Dendritic cell treated with granulocyte-macrophage colony-stimulating factor and Interleukin-4, amounts not matched to agents 40 ng/mL and 50 ng/mL, for 4 days (primary cell): ENCODE measurements at regions of chr14 and their contacts with region 1.

Region 1: GRCh38 chr14:105414456-105415371 is 4.9 kb upstream of the MTA1 start:
- H3K4me3 Mint-ChIP-seq: peak overlapping the region; percentile 63
- H3K27ac Mint-ChIP-seq: peak overlapping the region; percentile 63
- H3K4me1 Mint-ChIP-seq: peaks cover 38% of the 10 kb centered on the region
- H3K27me3 Mint-ChIP-seq: peaks cover 64% of the 10 kb centered on the region

Region 2: DNA sequence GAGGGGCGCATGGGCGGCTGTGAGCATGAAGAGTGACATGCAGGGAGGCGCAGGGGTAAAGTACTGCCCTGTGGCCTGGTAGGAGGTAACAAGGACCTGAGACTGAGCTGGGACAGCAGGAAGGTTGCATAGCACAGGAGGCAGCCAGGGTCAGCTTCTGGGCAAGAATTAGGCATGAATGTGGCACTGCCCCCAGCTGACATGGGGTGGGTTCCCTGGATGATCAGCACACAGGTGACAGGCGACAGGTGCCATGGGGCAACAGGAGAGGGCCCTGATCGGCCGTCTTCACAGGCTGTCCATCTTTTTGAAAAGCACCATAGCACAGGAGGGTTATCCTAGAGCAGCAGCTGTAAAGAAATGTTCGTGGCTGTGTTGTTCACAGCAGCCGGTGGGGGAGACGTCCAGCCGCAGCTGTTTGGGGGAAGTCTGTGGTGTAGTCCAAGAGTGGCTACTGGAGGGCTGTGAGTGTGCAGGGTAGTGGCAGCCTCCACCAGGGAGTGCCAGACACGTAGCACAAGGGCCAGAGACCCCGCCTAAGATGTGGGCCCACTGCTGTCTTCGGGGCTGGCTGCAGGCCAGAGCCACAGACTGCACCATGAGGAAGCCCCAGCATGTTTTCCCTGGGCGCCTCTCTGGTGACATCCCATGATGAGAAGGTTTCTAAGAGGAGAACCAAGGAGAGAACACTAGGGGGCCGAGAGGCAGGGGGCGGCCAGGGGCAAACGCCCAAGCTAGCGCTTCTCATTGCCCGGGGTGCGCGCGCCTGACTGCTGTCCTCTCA is 420.7 kb before region 1 on chr14:
- intact Hi-C with region 1: no loop called
- H3K4me3 Mint-ChIP-seq: no peak overlapping the region
- H3K27ac Mint-ChIP-seq: no peak overlapping the region
- H3K4me1 Mint-ChIP-seq: no peaks in the 10 kb centered on the region
- H3K27me3 Mint-ChIP-seq: no peaks in the 10 kb centered on the region

Region 3: DNA sequence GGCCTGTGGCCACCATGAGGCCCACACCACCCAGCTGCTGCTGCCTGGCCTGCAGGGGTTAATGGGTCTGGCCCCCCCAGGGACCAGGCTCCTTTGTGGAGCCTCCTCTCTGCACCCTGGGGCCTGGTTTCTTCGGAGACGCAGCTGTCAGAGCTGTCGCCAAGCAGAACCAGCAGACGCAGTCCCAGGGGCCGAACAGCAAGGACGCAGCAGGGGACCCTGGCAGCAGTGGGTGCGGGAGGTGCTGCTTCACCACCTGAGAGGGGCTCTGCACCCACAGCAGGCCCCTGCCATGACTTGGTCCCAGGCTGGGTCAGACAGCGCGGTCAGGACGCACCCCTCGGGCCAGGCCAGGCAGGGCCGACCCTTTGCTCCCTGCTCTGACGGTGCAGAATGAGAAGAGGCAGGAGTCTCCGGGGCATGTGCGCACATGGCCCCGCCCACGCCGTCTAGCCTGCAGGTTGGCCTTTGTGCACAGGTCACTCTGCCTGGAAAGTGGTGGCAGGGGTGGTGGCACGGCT is 276.6 kb before region 1 on chr14:
- intact Hi-C with region 1: no loop called
- H3K4me3 Mint-ChIP-seq: no peak overlapping the region
- H3K27ac Mint-ChIP-seq: no peak overlapping the region
- H3K4me1 Mint-ChIP-seq: no peaks in the 10 kb centered on the region
- H3K27me3 Mint-ChIP-seq: peaks cover 8% of the 10 kb centered on the region

Region 4: DNA sequence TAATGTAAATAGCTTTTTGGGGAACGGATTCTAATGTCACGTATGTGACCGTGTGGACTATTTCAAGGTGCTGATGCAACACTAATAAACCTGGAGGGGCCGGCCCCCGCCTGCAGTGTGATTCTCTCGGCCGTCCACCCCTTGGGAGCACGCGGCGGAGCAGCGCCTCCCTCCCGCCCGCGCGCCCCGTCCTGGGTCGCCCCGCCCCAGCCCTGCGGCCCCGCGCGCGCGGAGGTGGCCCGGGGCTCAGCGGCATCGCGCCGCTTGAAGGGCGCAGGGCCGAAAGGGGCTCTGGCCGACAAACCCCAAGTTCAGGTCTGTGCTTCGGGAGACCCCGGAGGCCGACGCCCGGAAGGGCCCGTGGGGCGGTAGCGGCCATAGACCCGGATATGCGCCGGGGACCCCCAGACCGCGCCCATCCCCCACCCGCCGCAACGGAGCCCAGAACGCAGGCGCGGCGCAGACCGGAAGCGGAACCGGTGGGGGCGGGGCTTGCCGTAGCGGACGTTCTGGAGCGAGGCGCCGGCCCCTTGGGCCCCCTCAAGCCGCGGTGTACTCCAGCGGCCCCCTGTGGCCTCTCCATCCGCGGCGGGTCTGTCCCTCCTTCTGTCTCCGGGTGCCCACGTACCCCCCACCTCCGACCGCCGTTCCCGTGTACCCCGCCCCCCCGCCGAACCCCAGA is 16.5 kb before region 1 on chr14 and contains the start of gene TEX22:
- intact Hi-C with region 1: loop called (anchors 2 kb)
- H3K4me3 Mint-ChIP-seq: peak within 1 kb of the TSS; percentile 93
- H3K27ac Mint-ChIP-seq: peak within 1 kb of the TSS; percentile 93
- H3K4me1 Mint-ChIP-seq: peaks cover 77% of the 10 kb centered on the region
- H3K27me3 Mint-ChIP-seq: no peaks in the 10 kb centered on the region